ENCODE measurements at regions of chr10 and their contacts with region 1.

Region 1: DNA sequence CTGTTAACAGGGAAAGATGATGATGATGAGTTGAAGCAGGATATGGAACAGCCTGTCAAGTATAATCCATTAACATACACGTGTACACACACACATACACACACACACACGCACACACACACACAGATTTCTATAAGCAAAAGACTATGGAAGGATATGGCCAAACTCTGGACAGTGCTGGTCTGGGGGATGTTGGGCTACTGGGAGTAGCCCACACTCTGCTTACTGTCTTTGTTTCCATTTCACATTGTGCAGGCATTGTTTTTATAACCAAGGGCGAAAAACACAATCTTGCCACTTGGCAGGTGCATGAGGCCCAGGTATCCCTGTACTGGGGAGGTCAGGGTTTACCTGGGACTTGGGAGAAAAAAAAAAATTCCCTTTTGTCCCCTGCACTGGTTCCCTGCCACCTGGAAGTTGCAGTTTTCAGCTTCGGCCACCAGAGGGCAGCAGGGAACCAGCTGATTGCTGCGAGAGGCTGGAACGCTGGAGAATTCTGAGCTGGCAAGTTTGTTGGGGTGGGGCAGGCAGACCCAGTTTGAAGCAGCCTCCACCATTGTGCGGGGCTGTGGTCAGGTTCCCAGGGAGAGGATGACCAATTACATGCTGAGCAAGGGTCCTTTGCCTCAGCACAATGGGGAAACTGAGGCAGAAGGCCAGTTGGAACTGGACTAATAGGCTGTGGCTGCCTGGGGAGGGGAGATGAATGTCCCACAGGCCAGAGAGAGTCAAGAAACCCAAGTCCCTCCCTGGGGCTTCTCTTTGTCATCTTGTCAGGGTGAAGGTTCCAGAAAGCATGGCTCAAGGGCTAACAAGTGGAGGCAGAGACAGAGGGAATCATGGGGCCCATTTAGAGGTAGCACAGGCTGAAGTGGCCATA is 27.3 kb downstream of the PPIF start:
- DNase-seq: peak; percentile 69

Region 2: DNA sequence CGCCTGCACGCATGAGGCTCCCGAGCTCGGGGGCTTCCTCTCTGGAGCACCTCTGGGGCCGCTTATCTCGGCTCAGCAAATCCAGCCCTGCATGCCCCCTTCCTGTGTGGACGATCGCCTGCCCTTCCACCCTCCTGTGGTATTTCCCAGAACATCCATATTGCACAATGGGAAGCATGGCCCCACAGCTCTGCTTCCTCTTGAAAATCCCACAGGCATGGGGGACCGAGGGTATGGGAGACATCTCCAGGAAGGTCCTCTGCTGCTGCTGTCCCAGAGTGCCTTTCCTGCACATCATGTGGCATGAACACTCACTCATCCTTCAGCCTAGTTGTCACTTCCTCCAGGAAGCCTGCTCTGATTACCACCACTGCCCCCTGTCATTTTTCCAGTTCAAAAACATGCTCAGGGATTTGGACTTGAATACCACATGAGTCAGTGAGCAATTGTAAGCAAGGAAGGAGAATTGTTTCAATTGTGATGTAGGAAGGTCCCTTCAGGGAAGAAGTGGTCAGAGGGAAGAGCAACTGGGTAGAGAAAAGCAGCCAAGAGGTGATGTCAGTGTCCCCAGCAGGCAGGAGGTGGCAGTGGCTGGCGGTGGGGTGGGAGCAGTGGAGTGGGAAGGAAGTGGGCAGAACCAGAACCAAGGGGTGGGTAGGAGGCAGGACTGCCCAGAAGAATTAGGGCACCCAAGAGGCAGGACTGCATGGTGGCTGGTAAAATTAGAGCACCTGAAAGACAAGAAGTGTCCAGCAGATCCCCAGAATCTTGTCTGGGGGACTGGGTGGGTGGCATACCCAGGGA is 373.3 kb before region 1 on chr10:
- in situ Hi-C with region 1: no loop called
- DNase-seq: peak; percentile 10

Region 3: GRCh38 chr10:79487296-79488194 is 113.0 kb after region 1 on chr10:
- in situ Hi-C with region 1: loop called (anchors 25 kb)
- DNase-seq: peak; percentile 82

Measured in SK-MEL-5 (cell line).